Right ventricle myocardium inferior (tissue), 1 donor: ENCODE measurements at regions of chr3 and their contacts with region 1.

Region 1: DNA sequence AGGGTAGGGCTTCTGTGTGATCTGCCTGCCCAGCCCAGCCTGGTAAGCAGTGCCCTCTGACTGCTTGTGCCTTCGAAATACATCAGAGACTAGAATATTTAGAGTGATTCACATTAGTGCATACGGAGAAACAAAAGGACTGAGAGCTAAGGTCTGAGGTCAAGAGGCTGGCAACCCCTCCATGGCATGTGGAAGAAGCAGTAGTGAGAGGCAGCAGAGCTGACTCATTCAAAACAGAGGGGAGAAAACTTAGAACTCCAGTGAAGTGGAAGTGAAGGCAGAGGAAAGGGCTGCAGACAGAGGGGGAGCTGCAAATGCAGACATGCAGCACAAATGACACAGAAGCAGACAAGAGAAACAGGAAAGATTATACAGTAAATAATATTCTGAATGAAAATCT is 61.6 kb downstream of the ULK4 start:
- DNase-seq: no peak
- ATAC-seq: no peak

Region 2: GRCh38 chr3:41997702-41998550 is 97.7 kb after region 1 on chr3:
- intact Hi-C with region 1: loop called (anchors 10 kb)
- DNase-seq: no peak
- ATAC-seq: peak; percentile 72

Region 3: DNA sequence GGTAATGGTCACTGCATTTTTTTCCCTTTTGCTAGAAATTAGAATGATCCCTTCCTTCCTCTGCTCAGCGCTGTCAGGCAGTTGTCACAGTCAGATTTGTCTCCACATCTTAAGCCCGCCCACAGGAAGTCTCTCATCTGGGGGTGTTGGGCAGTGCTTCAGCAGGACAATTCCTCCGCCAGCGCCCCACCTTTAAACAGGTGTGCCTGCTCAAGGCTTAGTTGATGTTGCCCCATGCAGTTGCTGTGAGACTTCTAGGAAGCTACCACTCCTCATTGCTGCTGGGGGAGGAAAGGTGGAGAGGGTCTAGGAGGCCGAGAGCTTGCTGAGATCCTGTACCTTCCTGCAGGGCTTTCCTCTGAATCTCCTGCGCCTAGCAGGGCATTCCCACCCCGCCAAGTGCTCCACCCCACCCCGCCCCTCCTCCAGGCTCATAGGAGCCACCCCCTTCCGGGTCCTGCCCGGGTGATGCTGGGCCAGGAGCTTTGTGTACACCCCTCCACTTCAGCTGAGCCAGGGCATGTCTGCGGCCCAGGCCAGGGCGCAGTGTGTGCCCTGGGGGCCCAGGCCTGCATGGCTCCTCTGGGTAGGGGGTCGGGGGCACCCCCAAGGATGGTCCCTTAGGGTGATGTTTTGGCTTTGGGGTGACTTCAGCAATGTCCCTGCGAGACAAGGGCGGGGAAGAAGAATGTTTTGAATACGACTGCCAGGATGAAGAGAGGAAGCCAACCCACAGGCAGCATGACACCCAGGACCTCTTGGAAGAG is 259.6 kb after region 1 on chr3:
- intact Hi-C with region 1: no loop called
- DNase-seq: peak; percentile 71
- ATAC-seq: peak; percentile 85